ENCODE measurements at regions of chr19 and their contacts with region 1.

Region 1: GRCh38 chr19:19821366-19821951 is at the start of gene ZNF506:
- DNase-seq: peak; percentile 91
- H3K4me3 ChIP-seq: peak within 1 kb of the TSS; percentile 82
- H3K27ac ChIP-seq: peak within 1 kb of the TSS; percentile 99
- H3K27me3 ChIP-seq: no peaks in the 10 kb centered on the region
- CTCF ChIP-seq: no peak
- polyA plus RNA-seq, gene ZNF506: 10.4 and 14.2 TPM in 2 replicates

Region 2: GRCh38 chr19:19488875-19489690 is 332.4 kb before region 1 on chr19:
- CTCF ChIA-PET with region 1: no interaction called
- POLR2A ChIA-PET with region 1: no interaction called
- DNase-seq: peak; percentile 69
- H3K4me3 ChIP-seq: peak overlapping the region; percentile 25
- H3K27ac ChIP-seq: peak overlapping the region; percentile 90
- H3K27me3 ChIP-seq: no peaks in the 10 kb centered on the region
- CTCF ChIP-seq: no peak

Region 3: GRCh38 chr19:19618219-19619051 is 203.0 kb before region 1 on chr19 and contains the start of gene PBX4:
- CTCF ChIA-PET with region 1: no interaction called
- POLR2A ChIA-PET with region 1: no interaction called
- DNase-seq: peak; percentile 48
- H3K4me3 ChIP-seq: peak within 1 kb of the TSS; percentile 60
- H3K27ac ChIP-seq: no peak within 1 kb of the TSS
- H3K27me3 ChIP-seq: no peaks in the 10 kb centered on the region
- CTCF ChIP-seq: no peak
- polyA plus RNA-seq, gene PBX4: 0.63 and 0.69 TPM in 2 replicates

Region 4: GRCh38 chr19:19776041-19777008 is 45.1 kb before region 1 on chr19:
- CTCF ChIA-PET with region 1: no interaction called
- POLR2A ChIA-PET with region 1: interaction called, 15 read pairs
- DNase-seq: peak; percentile 97
- H3K4me3 ChIP-seq: peak overlapping the region; percentile 95
- H3K27ac ChIP-seq: peak overlapping the region; percentile 47
- H3K27me3 ChIP-seq: no peaks in the 10 kb centered on the region
- CTCF ChIP-seq: no peak

Region 5: DNA sequence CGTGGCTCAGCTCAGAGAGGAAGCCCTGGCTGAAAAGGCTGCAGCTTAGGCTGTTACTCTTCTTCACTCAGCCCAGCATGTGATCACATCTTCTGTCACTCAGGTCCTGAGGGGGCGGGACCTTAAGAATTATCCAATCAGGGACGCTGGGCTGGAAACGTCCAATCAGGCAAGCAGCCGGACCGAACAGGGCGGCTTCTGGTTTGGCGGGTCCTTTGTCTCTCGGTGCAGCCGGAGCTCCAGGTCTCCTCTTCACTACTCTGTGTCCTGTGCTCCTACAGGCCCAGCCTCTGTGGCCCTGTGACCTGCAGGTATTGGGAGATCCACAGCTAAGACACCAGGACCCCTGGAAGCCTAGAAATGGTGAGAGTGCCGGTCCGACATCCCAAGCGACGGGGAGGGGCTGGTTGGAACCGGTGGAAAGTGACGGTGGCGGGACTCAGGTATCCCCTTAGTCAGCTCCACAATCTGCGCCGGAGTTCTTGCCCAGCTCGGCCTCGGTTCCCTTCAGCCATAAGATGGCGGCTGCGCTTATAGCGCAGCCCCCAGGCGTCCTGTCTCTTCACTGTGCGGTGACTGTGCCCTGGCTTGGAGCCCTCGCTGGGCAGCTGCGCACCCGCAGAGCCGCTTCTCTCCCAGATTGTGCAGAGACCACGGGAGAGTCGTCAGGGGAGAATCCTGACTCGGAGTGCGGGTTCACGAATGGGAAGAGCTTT is 79.4 kb after region 1 on chr19 and contains the start of gene ZNF93:
- CTCF ChIA-PET with region 1: no interaction called
- POLR2A ChIA-PET with region 1: interaction called, 10 read pairs
- DNase-seq: peak; percentile 93
- H3K4me3 ChIP-seq: peak within 1 kb of the TSS; percentile 82
- H3K27ac ChIP-seq: peak within 1 kb of the TSS; percentile 97
- H3K27me3 ChIP-seq: no peaks in the 10 kb centered on the region
- CTCF ChIP-seq: no peak
- polyA plus RNA-seq, gene ZNF93: 4.6 and 4.9 TPM in 2 replicates